Heart right ventricle (tissue), 16 donors: ENCODE measurements at regions of chr17 and their contacts with region 1.

Region 1: DNA sequence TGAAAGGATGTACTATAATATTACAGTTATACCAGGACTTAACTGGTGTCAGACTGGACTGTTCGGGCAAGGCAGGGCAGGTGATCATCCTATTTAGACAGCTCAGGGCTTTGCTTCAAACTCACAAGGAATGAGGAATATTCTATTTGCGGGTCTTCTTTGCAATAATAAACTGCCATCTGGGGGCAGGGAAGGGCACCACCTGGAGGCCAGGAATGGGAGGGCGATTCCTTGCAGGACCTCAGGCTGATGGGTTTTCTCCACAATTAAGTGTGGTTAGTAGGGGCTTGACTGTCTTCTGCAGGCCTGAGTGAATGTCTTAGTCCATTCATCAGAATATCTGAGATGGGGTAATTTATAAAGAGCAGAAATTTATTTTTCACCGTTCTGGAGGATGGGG is 424.1 kb downstream of the CA10 start:
- DNase-seq: peak in 1 of 2 donors; percentile 23
- ATAC-seq: no peak
- H3K4me3 ChIP-seq: no peak overlapping the region
- H3K27ac ChIP-seq: no peak overlapping the region
- H3K4me1 ChIP-seq: no peaks in the 10 kb centered on the region
- H3K27me3 ChIP-seq: peaks cover 0 to 4% (median 0%) of the 10 kb centered on the region in 7 donors
- CTCF ChIP-seq: peak in 8 of 9 donors; percentile 9 to 65 (median 44)

Region 2: GRCh38 chr17:51371732-51372151 is 362.7 kb before region 1 on chr17:
- intact Hi-C with region 1: loop called in 1 of 10 experiments (anchors 10 kb)
- DNase-seq: peak in 1 of 2 donors; percentile 15
- ATAC-seq: peak in 6 of 8 donors; percentile 68 to 84 (median 73)
- H3K4me3 ChIP-seq: no peak overlapping the region
- H3K27ac ChIP-seq: no peak overlapping the region
- H3K4me1 ChIP-seq: peaks cover 0 to 18% (median 0%) of the 10 kb centered on the region in 9 donors
- H3K27me3 ChIP-seq: peaks cover 0 to 25% (median 11%) of the 10 kb centered on the region in 7 donors
- CTCF ChIP-seq: peak in 8 of 9 donors; percentile 11 to 63 (median 49)

Region 3: DNA sequence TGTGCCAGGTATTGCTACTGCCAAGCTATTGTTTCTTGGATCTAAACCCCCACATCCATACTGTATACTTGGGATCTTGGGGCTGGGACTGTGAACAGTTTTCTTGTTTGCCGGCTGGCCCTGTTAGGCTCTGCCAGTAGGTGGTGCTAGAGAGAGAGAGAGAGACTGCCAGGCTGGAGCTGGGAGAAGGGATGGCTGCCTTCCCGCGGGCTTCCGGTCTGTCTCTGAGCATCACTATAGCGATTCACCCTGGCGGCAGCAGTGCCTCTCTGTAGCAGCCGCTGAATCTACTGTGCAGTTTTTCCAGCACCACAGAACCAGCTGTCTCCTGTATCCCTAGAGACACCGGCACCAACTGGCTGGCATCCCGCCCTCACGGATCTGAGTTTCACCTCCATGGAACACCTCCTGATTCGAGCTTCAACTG is 272.9 kb before region 1 on chr17:
- intact Hi-C with region 1: loop called in 1 of 10 experiments (anchors 5 kb)
- DNase-seq: peak; percentile 19 to 31
- ATAC-seq: peak in 3 of 8 donors; percentile 24 to 59 (median 45)
- H3K4me3 ChIP-seq: no peak overlapping the region
- H3K27ac ChIP-seq: no peak overlapping the region
- H3K4me1 ChIP-seq: no peaks in the 10 kb centered on the region
- H3K27me3 ChIP-seq: peaks cover 0 to 18% (median 5%) of the 10 kb centered on the region in 7 donors
- CTCF ChIP-seq: peak in 8 of 9 donors; percentile 38 to 85 (median 62)

Region 4: GRCh38 chr17:51585514-51586104 is 148.9 kb before region 1 on chr17:
- intact Hi-C with region 1: loop called in 2 of 10 experiments (anchors 5 to 10 kb)
- DNase-seq: no peak
- ATAC-seq: no peak
- H3K4me3 ChIP-seq: no peak overlapping the region
- H3K27ac ChIP-seq: no peak overlapping the region
- H3K4me1 ChIP-seq: no peaks in the 10 kb centered on the region
- H3K27me3 ChIP-seq: peaks cover 0 to 11% (median 0%) of the 10 kb centered on the region in 7 donors
- CTCF ChIP-seq: peak; percentile 16 to 68 (median 44)